Endothelial cell of umbilical vein (primary cell): ENCODE measurements at regions of chr13 and their contacts with region 1.

Region 1: GRCh38 chr13:112873851-112874750 is 94.9 kb upstream of the MCF2L start:
- DNase-seq: peak; percentile 61
- H3K4me3 ChIP-seq: no peak overlapping the region
- H3K27ac ChIP-seq: no peak overlapping the region
- H3K4me1 ChIP-seq: no peaks in the 10 kb centered on the region
- H3K27me3 ChIP-seq: no peaks in the 10 kb centered on the region
- CTCF ChIP-seq: peak; percentile 90 to 92
- POLR2A ChIP-seq: no peak

Region 2: GRCh38 chr13:111474136-111475002 is 1399.7 kb before region 1 on chr13:
- CTCF ChIA-PET with region 1: no interaction called
- POLR2A ChIA-PET with region 1: no interaction called
- dilution Hi-C with region 1: no loop called
- intact Hi-C with region 1: loop called (anchors 5 kb)
- DNase-seq: peak; percentile 20
- H3K4me3 ChIP-seq: no peak overlapping the region
- H3K27ac ChIP-seq: no peak overlapping the region
- H3K4me1 ChIP-seq: no peaks in the 10 kb centered on the region
- H3K27me3 ChIP-seq: no peaks in the 10 kb centered on the region
- CTCF ChIP-seq: peak; percentile 19 to 35
- POLR2A ChIP-seq: no peak

Region 3: DNA sequence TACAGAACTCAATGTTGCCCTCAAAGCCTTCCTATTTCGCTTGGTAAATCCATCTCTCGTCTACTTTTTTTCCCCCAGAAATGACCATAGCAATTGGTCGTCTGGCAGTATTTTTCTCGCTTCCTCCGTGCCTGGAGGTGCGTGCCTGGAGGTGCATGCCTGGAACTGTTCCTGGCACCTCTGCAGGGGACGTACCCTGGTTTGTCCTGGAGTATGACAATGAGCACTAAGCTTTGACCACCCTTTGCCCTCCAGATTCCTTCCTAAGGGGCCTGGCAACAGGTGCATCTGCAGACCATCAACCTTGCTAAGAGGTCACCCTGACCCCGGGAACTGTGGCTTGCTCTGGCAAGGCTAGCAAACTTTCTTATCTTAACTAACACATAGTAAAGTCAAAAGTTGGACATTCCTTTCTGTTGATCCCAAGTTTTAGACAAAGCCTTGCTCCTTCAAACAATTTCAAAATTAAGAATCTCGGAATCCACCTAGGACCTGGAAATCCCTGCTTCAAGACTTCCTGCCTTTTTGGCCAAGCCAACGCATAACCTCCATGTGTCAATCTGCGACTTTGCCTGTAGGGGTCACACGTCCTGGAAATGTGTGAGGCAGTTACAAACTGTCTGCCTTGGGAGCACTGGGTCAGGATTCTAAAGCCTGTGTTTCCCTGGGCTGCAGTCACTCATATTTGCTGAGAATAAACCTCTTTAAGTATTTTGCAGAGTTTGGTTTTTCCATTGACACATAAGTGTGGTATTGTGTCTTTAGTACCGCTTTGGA is 257.3 kb before region 1 on chr13:
- CTCF ChIA-PET with region 1: interaction called, 6 read pairs
- POLR2A ChIA-PET with region 1: no interaction called
- dilution Hi-C with region 1: no loop called
- intact Hi-C with region 1: loop called (anchors 1 kb)
- DNase-seq: peak; percentile 53
- H3K4me3 ChIP-seq: no peak overlapping the region
- H3K27ac ChIP-seq: no peak overlapping the region
- H3K4me1 ChIP-seq: no peaks in the 10 kb centered on the region
- H3K27me3 ChIP-seq: peaks cover 0 to 4% of the 10 kb centered on the region in 2 experiments
- CTCF ChIP-seq: peak; percentile 63 to 73
- POLR2A ChIP-seq: no peak

Region 4: DNA sequence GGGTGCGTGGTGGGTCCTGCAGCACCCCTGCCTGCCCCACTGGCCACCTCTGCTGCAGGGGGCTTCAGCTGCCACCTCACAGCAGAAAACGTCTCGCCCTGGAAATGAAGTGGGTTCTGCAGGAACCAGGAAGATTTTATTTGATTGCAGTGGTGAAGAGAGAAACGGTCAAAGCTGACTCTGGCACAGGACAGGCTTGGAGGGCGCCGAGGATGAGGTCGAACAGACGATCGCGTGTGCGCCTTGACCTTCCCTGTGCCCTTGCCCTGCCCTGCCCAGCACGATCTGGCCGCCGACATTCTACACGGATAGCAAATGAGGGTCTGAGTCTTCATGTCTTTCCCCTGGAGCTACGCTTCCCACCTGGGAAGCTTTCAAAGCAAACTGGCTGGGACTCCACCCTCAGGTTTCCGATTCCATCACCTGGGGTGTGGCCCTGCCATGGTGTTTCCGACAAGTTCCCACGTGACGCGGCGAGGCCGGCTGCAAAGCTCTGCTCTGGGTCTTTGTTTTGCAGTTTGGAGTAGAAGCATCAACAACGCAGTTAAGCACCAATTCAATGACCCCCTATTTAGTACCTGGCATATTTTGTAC is 235.8 kb before region 1 on chr13:
- CTCF ChIA-PET with region 1: interaction called, 38 read pairs
- POLR2A ChIA-PET with region 1: no interaction called
- dilution Hi-C with region 1: no loop called
- intact Hi-C with region 1: loop called (anchors 1 kb)
- DNase-seq: no peak
- H3K4me3 ChIP-seq: no peak overlapping the region
- H3K27ac ChIP-seq: no peak overlapping the region
- H3K4me1 ChIP-seq: peaks cover 4% of the 10 kb centered on the region
- H3K27me3 ChIP-seq: peaks cover 22 to 32% of the 10 kb centered on the region in 2 experiments
- CTCF ChIP-seq: no peak
- POLR2A ChIP-seq: no peak

Region 5: GRCh38 chr13:112689303-112690165 is 184.6 kb before region 1 on chr13 and contains the start of gene ATP11A:
- CTCF ChIA-PET with region 1: interaction called, 5 read pairs
- POLR2A ChIA-PET with region 1: no interaction called
- dilution Hi-C with region 1: no loop called
- intact Hi-C with region 1: loop called (anchors 1 kb)
- DNase-seq: peak; percentile 90
- H3K4me3 ChIP-seq: peak within 1 kb of the TSS; percentile 92 to 97 (median 96)
- H3K27ac ChIP-seq: peak within 1 kb of the TSS; percentile 49
- H3K4me1 ChIP-seq: peaks cover 14% of the 10 kb centered on the region
- H3K27me3 ChIP-seq: no peaks in the 10 kb centered on the region
- CTCF ChIP-seq: no peak
- POLR2A ChIP-seq: no peak
- total RNA-seq, gene ATP11A: 71.7 and 88.1 TPM in 2 replicates

Region 6: GRCh38 chr13:112859817-112860190 is 14.3 kb before region 1 on chr13:
- CTCF ChIA-PET with region 1: interaction called, 11 read pairs
- POLR2A ChIA-PET with region 1: no interaction called
- dilution Hi-C with region 1: no loop called
- intact Hi-C with region 1: no loop called
- DNase-seq: peak; percentile 87
- H3K4me3 ChIP-seq: no peak overlapping the region
- H3K27ac ChIP-seq: peak overlapping the region; percentile 14
- H3K4me1 ChIP-seq: peaks cover 11% of the 10 kb centered on the region
- H3K27me3 ChIP-seq: no peaks in the 10 kb centered on the region
- CTCF ChIP-seq: no peak
- POLR2A ChIP-seq: no peak

Region 7: DNA sequence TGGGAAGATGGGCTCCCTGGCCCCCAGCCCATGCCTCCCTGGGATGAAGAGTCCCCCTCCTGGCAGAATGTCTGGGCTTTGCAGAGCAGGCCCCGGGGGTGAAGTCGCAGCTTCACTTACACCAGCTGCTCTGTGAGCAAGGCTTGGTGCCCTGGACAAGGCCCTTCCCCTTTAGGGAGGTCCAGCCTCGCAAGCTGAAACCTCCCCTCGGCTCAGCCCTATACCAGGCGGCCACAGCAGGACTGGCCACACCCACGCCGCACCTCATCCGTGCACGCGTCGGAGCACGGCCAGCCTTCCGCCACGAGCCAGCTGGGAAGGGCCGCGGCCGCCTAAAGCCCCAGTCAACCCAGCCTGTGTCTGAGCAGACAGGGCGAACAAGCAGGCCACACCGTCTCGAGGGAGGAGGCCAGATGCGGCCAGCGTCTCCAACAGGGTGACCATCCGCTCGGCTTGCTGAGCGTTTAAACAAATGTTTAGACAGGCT is 11.7 kb after region 1 on chr13:
- CTCF ChIA-PET with region 1: interaction called, 12 read pairs
- POLR2A ChIA-PET with region 1: no interaction called
- dilution Hi-C with region 1: no loop called
- intact Hi-C with region 1: no loop called
- DNase-seq: peak; percentile 83
- H3K4me3 ChIP-seq: no peak overlapping the region
- H3K27ac ChIP-seq: no peak overlapping the region
- H3K4me1 ChIP-seq: no peaks in the 10 kb centered on the region
- H3K27me3 ChIP-seq: no peaks in the 10 kb centered on the region
- CTCF ChIP-seq: no peak
- POLR2A ChIP-seq: no peak